ENCODE measurements at regions of chr17 and their contacts with region 1.

Region 1: DNA sequence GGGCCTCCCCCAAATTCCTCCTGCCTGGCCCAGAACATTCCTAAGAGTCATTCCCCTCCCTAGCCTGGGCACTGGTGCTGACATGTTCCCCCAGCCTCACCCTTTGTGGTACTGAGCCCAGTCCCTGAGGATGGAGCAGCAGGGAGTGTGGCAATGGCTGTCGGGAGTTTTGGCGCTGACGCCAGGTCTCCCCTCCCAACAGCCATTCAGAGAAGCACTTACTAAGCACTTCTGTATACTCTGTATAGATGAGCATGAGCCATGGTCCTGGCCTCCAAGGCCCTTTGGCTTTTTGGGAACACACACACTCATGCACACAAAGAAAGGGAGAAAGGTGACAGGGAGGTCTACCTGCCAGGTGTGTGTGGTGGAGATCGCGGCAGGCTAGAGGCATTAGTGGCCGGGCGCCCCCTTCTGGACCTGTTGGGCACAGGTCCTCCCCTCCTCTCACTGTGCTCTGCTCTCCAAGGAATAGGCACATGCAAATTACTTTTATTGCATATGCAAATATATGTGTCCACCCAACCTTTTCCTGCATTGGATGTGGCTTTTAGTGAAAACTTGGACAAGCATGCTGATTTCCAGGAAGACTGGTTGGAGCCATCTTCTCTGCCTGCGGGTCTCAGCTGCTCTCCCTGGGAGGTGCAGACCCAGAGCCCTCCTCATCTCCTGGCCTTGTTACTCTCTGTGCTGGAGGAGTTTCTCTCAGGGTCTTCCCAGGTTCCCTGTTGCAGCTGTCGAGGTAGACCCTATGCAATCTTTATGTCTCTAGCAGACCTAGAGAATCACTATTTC is 17.4 kb upstream of the C17orf107 start:
- DNase-seq: peak in 1 of 2 experiments; percentile 89
- H3K4me3 ChIP-seq: no peak overlapping the region
- H3K27ac ChIP-seq: no peak overlapping the region
- H3K4me1 ChIP-seq: peaks cover 0 to 4% (median 1%) of the 10 kb centered on the region in 4 experiments; a peak in 3 of 7 replicates
- H3K27me3 ChIP-seq: no peaks in the 10 kb centered on the region
- CTCF ChIP-seq: peak; percentile 88 to 96 (median 94)
- EP300 ChIP-seq: no peak
- POLR2A ChIP-seq: no peak
- RAD21 ChIP-seq: peak; percentile 87 to 89

Region 2: GRCh38 chr17:4733073-4733531 is 148.9 kb before region 1 on chr17:
- CTCF ChIA-PET with region 1: interaction called, 24 read pairs
- POLR2A ChIA-PET with region 1: interaction called, 3 read pairs
- DNase-seq: no peak
- H3K4me3 ChIP-seq: no peak overlapping the region
- H3K27ac ChIP-seq: no peak overlapping the region
- H3K4me1 ChIP-seq: peaks cover 0 to under 1% (median 0%) of the 10 kb centered on the region in 4 experiments; a peak in 2 of 7 replicates
- H3K27me3 ChIP-seq: peaks cover 1 to 17% (median 6%) of the 10 kb centered on the region in 4 experiments; a peak in 6 of 7 replicates
- CTCF ChIP-seq: peak; percentile 16 to 39 (median 17); a peak in 3 of 4 replicates
- EP300 ChIP-seq: no peak
- POLR2A ChIP-seq: no peak
- RAD21 ChIP-seq: peak in 1 of 2 experiments; percentile 39; a peak in 2 of 4 replicates

Region 3: DNA sequence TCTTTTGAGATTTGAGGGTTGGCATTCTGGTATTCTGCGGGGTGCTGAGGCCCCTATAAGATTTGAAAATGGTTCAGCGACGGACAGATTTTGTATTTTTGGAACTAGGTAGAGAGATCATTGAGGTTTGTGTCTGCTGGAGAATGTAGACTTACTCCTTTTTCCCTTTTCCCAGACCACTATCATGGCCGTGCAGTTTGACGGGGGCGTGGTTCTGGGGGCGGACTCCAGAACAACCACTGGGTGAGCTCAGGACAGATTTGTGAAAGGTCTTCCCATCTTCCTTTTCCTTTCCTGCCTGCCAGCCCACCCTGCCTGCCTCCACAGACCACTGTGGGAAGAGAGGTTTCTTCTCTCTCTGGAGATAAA is 85.4 kb before region 1 on chr17:
- CTCF ChIA-PET with region 1: interaction called, 11 read pairs
- POLR2A ChIA-PET with region 1: no interaction called
- DNase-seq: peak in 1 of 2 experiments; percentile 63
- H3K4me3 ChIP-seq: peak overlapping the region; percentile 96 to 100 (median 98)
- H3K27ac ChIP-seq: peak overlapping the region; percentile 70
- H3K4me1 ChIP-seq: no peaks in the 10 kb centered on the region; a peak in 1 of 7 replicates
- H3K27me3 ChIP-seq: no peaks in the 10 kb centered on the region; a peak in 1 of 7 replicates
- CTCF ChIP-seq: no peak
- EP300 ChIP-seq: no peak
- POLR2A ChIP-seq: peak in 1 of 2 experiments; percentile 6; a peak in 1 of 3 replicates
- RAD21 ChIP-seq: no peak

Region 4: DNA sequence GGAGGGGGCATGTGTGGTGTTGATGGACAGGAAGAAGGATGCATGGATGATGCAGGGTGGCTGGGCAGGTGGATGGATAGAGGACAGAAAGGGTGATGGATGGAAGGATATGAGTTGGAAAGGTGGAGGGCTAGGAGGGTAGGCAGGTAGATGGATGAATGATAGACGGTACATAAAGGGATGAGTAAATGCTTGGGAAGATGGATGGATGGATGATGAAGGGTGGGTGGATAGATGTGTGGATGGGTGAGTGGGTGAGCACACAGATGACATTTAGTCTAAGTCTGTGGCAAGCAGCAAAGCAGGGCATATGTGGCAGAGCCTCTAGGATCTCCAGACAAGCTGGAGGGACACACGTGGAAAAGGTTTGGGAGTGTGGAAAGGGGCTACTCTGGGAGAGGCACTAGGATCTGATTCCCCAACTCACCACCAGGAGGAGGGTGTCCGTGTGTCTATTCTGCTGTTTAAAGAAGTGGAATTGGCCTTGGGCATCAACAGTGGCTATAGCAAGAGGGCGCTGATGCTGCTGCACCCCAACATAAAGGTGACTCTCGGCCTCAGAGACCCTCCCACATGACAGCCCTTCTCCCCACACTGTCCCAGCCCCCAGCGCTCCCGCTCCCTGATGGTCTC is 66.8 kb before region 1 on chr17:
- CTCF ChIA-PET with region 1: interaction called, 55 read pairs
- POLR2A ChIA-PET with region 1: interaction called, 4 read pairs
- DNase-seq: no peak
- H3K4me3 ChIP-seq: no peak overlapping the region
- H3K27ac ChIP-seq: no peak overlapping the region
- H3K4me1 ChIP-seq: no peaks in the 10 kb centered on the region
- H3K27me3 ChIP-seq: no peaks in the 10 kb centered on the region
- CTCF ChIP-seq: peak; percentile 58 to 80 (median 76)
- EP300 ChIP-seq: no peak
- POLR2A ChIP-seq: no peak
- RAD21 ChIP-seq: peak; percentile 54 to 59

Region 5: GRCh38 chr17:4858882-4859260 is 23.1 kb before region 1 on chr17:
- CTCF ChIA-PET with region 1: interaction called, 34 read pairs
- POLR2A ChIA-PET with region 1: interaction called, 5 read pairs
- DNase-seq: no peak
- H3K4me3 ChIP-seq: peak overlapping the region in 1 of 4 experiments; percentile 24; a peak in 2 of 8 replicates
- H3K27ac ChIP-seq: peak overlapping the region; percentile 62; the same call in 1 of the 2 replicates
- H3K4me1 ChIP-seq: peaks cover 22 to 41% (median 34%) of the 10 kb centered on the region in 4 experiments
- H3K27me3 ChIP-seq: no peaks in the 10 kb centered on the region
- CTCF ChIP-seq: no peak
- EP300 ChIP-seq: no peak
- POLR2A ChIP-seq: no peak
- RAD21 ChIP-seq: no peak

Region 6: DNA sequence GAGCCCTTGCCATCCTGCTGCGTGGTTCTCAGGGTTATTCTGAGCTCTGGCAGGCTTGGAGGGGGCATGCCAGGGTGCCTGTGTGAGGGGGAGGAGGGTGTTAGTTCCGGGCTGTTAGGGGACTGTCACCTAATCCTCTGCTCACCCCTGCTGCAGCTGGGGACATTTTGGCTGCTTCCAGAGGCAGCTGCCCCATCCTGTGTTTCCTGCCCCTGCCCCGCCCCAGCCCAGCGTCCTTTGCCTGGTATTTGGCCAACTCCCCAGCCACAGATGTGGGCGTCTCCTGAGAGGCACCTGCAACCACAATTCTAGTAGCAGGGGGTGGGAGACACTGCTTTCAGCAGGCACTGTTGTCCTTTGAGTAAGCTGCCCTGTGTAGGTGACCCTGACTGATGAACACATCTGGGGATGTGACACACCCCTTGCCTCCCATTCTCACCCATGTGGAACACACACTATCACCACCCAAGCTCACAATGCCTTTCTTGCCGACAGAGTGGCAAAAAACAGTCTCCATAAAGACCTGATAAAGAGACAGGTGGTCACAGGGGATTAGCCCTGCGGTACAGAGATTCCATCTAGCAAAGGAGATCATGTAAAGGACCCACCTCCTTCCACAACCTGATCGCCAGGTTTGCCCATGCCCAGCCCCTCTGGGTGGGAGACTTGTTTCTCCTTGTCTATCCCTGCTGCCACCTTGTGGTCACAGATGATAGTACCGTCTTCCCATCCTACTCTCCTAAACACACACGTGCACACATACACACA is 21.3 kb after region 1 on chr17 and contains the start of gene CHRNE:
- CTCF ChIA-PET with region 1: interaction called, 14 read pairs
- POLR2A ChIA-PET with region 1: no interaction called
- DNase-seq: peak in 1 of 2 experiments; percentile 91
- H3K4me3 ChIP-seq: no peak within 1 kb of the TSS
- H3K27ac ChIP-seq: no peak within 1 kb of the TSS
- H3K4me1 ChIP-seq: peaks cover 3 to 14% (median 4%) of the 10 kb centered on the region in 4 experiments; a peak in 6 of 7 replicates
- H3K27me3 ChIP-seq: 0 out of 7 replicates have a peak, but pooled peaks cover 0 to 2% (median 0%) of the 10 kb centered on the region in 4 experiments
- CTCF ChIP-seq: peak; percentile 71 to 89 (median 81)
- EP300 ChIP-seq: no peak
- POLR2A ChIP-seq: no peak
- RAD21 ChIP-seq: peak; percentile 64 to 75
- total RNA-seq, gene CHRNE: 0.15 and 0.40 TPM in 2 replicates

Measured in H1 (cell line).